Dendritic cell treated with granulocyte-macrophage colony-stimulating factor and Interleukin-4, amounts not matched to agents 40 ng/mL and 50 ng/mL, for 4 days (primary cell): ENCODE measurements at regions of chr2 and their contacts with region 1.

Region 1: GRCh38 chr2:101831351-101831865 is 133.9 kb downstream of the MAP4K4 start:
- H3K4me3 Mint-ChIP-seq: no peak overlapping the region
- H3K27ac Mint-ChIP-seq: no peak overlapping the region
- H3K4me1 Mint-ChIP-seq: peaks cover 21% of the 10 kb centered on the region
- H3K27me3 Mint-ChIP-seq: no peaks in the 10 kb centered on the region

Region 2: DNA sequence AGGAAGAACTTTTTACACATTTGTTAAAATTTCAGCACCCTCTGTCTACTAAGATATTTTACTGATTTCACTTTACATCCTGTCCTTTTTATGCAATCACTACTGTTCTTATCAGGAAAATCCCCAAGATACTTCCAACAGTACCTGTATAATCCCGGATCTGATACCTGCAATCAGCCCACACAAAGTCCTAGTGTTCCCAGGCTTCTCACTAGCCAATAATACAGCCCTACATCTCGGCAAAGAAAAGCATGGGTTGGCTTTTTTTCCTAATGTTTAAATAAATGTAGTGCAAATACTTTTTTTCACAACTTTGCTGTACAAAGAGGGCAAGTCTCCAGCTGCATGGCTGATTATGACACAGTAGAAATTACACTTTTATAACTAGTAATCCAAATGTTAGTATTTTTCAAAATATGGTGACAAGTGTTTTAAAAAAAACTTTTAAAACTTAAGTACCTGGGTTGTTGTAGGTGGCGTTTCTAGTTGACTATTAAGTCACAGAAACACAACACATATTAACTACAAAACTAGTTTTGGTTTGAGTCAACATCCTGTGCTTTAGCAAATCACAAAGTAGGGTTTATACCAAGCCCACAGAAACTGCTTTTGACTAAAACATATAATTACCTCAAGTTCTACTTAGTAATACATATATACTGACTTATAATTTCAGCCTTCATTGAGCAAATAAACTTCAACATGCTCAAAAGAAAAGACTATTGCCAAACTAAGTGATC is 559.2 kb before region 1 on chr2:
- intact Hi-C with region 1: loop called (anchors 10 kb)
- H3K4me3 Mint-ChIP-seq: no peak overlapping the region
- H3K27ac Mint-ChIP-seq: no peak overlapping the region
- H3K4me1 Mint-ChIP-seq: peaks cover 4% of the 10 kb centered on the region
- H3K27me3 Mint-ChIP-seq: no peaks in the 10 kb centered on the region

Region 3: GRCh38 chr2:101341901-101342624 is 489.3 kb before region 1 on chr2:
- intact Hi-C with region 1: loop called (anchors 5 kb)
- H3K4me3 Mint-ChIP-seq: no peak overlapping the region
- H3K27ac Mint-ChIP-seq: no peak overlapping the region
- H3K4me1 Mint-ChIP-seq: peaks cover 38% of the 10 kb centered on the region
- H3K27me3 Mint-ChIP-seq: peaks cover 5% of the 10 kb centered on the region

Region 4: GRCh38 chr2:101419096-101419663 is 412.2 kb before region 1 on chr2:
- intact Hi-C with region 1: loop called (anchors 1 kb)
- H3K4me3 Mint-ChIP-seq: no peak overlapping the region
- H3K27ac Mint-ChIP-seq: no peak overlapping the region
- H3K4me1 Mint-ChIP-seq: peaks cover 5% of the 10 kb centered on the region
- H3K27me3 Mint-ChIP-seq: no peaks in the 10 kb centered on the region

Region 5: GRCh38 chr2:101770726-101771125 is 60.7 kb before region 1 on chr2:
- intact Hi-C with region 1: loop called (anchors 5 kb)
- H3K4me3 Mint-ChIP-seq: no peak overlapping the region
- H3K27ac Mint-ChIP-seq: peak overlapping the region; percentile 8
- H3K4me1 Mint-ChIP-seq: peaks cover 61% of the 10 kb centered on the region
- H3K27me3 Mint-ChIP-seq: no peaks in the 10 kb centered on the region